HepG2 (cell line): ENCODE measurements at regions of chr6 and their contacts with region 1.

Region 1: GRCh38 chr6:30742316-30743098 is at the start of gene FLOT1:
- DNase-seq: peak; percentile 97
- ATAC-seq: peak; percentile 87
- H3K4me3 ChIP-seq: peak within 1 kb of the TSS; percentile 91 to 98 (median 98)
- H3K27ac ChIP-seq: peak within 1 kb of the TSS; percentile 81
- H3K4me1 ChIP-seq: peaks cover 78% of the 10 kb centered on the region
- H3K27me3 ChIP-seq: no peaks in the 10 kb centered on the region; a peak in 1 of 5 replicates
- CTCF ChIP-seq: peak; percentile 38
- EP300 ChIP-seq: peak; percentile 5 to 52; a peak in 2 of 4 replicates
- POLR2A ChIP-seq: no peak; a peak in 2 of 4 replicates
- RAD21 ChIP-seq: peak; percentile 64
- total RNA-seq, gene FLOT1: 77.8 and 82.3 TPM in 2 replicates

Region 2: DNA sequence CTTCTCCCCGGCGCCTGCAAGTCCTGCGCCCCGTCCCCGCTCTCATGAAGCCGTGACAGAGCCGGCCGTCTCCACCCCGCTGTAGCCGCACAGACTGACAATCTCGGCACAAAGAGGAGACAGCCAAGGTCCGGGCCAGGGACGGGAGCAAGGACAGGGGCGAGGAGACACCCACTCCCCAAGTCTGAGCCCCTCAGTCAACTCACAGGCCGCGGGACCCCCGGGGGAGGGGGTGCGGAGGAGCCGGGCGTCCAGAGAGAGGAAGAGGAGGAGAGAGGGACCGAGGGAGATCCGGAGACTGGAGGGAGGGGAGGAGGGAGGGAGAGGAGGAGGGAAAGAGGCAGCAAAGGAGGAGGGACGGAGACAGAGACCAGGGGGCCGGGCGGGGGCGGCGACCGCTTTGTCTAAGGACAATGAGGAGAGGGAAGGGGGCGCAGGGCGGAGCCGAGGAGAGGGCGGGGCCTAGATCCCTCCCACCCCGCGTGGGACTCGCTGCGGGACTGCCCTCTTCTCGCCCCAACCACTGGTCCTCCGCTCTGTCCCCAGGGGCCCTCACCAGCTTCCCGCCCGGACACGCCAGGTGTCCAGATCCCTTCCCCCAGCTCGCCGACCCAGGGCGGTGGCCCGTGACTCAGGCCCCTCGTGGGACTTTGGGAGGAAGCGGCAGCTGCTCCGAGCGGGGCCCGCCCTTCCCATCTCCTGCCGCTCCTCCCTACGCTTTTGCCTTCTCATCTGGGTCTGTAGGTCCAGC is 55.4 kb before region 1 on chr6:
- CTCF ChIA-PET with region 1: no interaction called
- POLR2A ChIA-PET with region 1: interaction called, 14 read pairs
- in situ Hi-C with region 1: no loop called
- intact Hi-C with region 1: no loop called
- DNase-seq: peak; percentile 49
- ATAC-seq: peak; percentile 50
- H3K4me3 ChIP-seq: peak overlapping the region; percentile 77 to 84 (median 81)
- H3K27ac ChIP-seq: peak overlapping the region; percentile 43
- H3K4me1 ChIP-seq: peaks cover 79% of the 10 kb centered on the region
- H3K27me3 ChIP-seq: no peaks in the 10 kb centered on the region
- CTCF ChIP-seq: peak; percentile 6; the same call in 1 of the 2 replicates
- EP300 ChIP-seq: peak in 1 of 2 experiments; percentile 55; a peak in 1 of 4 replicates
- POLR2A ChIP-seq: peak in 1 of 2 experiments; percentile 67; a peak in 3 of 4 replicates
- RAD21 ChIP-seq: no peak

Region 3: DNA sequence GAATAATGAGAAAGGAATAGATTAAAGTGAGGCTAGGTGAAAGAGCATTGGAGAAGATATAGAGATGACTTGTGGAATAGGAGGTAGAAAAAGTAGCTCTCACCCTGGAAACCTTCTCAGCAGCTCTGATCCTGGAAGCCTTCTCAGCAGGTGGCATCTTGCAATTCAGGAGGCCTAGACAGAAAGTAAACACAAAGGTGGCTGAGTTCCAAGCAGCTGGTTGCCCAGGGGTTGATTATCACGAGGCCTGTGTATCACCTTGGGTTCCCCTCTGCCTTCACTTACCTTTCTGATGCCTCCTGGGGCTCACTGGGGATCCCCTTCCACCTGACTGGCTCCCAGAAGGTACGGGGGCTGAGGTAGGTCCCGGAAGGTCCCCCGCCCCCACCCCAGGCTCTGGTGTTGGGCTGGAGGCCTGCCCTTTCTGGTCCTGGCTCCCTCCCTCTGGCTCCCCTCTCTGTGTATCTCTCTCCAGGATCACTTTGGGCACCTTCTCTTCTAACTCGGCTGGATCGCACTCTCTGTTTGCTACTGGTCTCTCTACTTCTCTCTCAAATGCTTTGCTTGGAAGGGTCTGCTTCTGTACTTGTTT is 35.1 kb before region 1 on chr6:
- CTCF ChIA-PET with region 1: no interaction called
- POLR2A ChIA-PET with region 1: no interaction called
- in situ Hi-C with region 1: no loop called
- intact Hi-C with region 1: no loop called
- DNase-seq: no peak
- ATAC-seq: no peak
- H3K4me3 ChIP-seq: no peak overlapping the region
- H3K27ac ChIP-seq: no peak overlapping the region
- H3K4me1 ChIP-seq: peaks cover 7% of the 10 kb centered on the region; the same call in 1 of the 2 replicates
- H3K27me3 ChIP-seq: no peaks in the 10 kb centered on the region
- CTCF ChIP-seq: no peak
- EP300 ChIP-seq: no peak
- POLR2A ChIP-seq: no peak
- RAD21 ChIP-seq: no peak

Region 4: GRCh38 chr6:30759575-30760239 is 17.2 kb after region 1 on chr6:
- CTCF ChIA-PET with region 1: no interaction called
- POLR2A ChIA-PET with region 1: interaction called, 414 read pairs
- in situ Hi-C with region 1: no loop called
- intact Hi-C with region 1: loop called (anchors 1 kb)
- DNase-seq: peak; percentile 97
- ATAC-seq: peak; percentile 66
- H3K4me3 ChIP-seq: peak overlapping the region in 1 of 3 experiments; percentile 13; a peak in 1 of 6 replicates
- H3K27ac ChIP-seq: peak overlapping the region; percentile 80
- H3K4me1 ChIP-seq: peaks cover 81% of the 10 kb centered on the region
- H3K27me3 ChIP-seq: no peaks in the 10 kb centered on the region
- CTCF ChIP-seq: no peak
- EP300 ChIP-seq: peak; percentile 64 to 65; a peak in 3 of 4 replicates
- POLR2A ChIP-seq: no peak
- RAD21 ChIP-seq: no peak

Region 5: GRCh38 chr6:30781743-30782424 is 39.4 kb after region 1 on chr6:
- CTCF ChIA-PET with region 1: interaction called, 3 read pairs
- POLR2A ChIA-PET with region 1: interaction called, 68 read pairs
- in situ Hi-C with region 1: no loop called
- intact Hi-C with region 1: loop called (anchors 1 kb)
- DNase-seq: peak; percentile 96
- ATAC-seq: peak; percentile 87
- H3K4me3 ChIP-seq: peak overlapping the region; percentile 39 to 49 (median 43); a peak in 5 of 6 replicates
- H3K27ac ChIP-seq: peak overlapping the region; percentile 83
- H3K4me1 ChIP-seq: peaks cover 86% of the 10 kb centered on the region
- H3K27me3 ChIP-seq: no peaks in the 10 kb centered on the region
- CTCF ChIP-seq: 0 out of 2 replicates have a peak, but pooled peaks have one; percentile 12
- EP300 ChIP-seq: peak; percentile 90 to 93
- POLR2A ChIP-seq: peak; percentile 20 to 34; a peak in 2 of 4 replicates
- RAD21 ChIP-seq: peak; percentile 20; the same call in 1 of the 2 replicates

Region 6: GRCh38 chr6:30821862-30822782 is 79.6 kb after region 1 on chr6:
- CTCF ChIA-PET with region 1: interaction called, 3 read pairs
- POLR2A ChIA-PET with region 1: interaction called, 71 read pairs
- in situ Hi-C with region 1: loop called (anchors 5 kb)
- intact Hi-C with region 1: loop called (anchors 1 kb)
- DNase-seq: peak; percentile 70
- ATAC-seq: peak; percentile 49
- H3K4me3 ChIP-seq: peak overlapping the region in 2 of 3 experiments; percentile 20 to 35; a peak in 3 of 6 replicates
- H3K27ac ChIP-seq: peak overlapping the region; percentile 79
- H3K4me1 ChIP-seq: peaks cover 71% of the 10 kb centered on the region
- H3K27me3 ChIP-seq: no peaks in the 10 kb centered on the region
- CTCF ChIP-seq: peak; percentile 55
- EP300 ChIP-seq: no peak
- POLR2A ChIP-seq: no peak
- RAD21 ChIP-seq: peak; percentile 30; the same call in 1 of the 2 replicates

Region 7: DNA sequence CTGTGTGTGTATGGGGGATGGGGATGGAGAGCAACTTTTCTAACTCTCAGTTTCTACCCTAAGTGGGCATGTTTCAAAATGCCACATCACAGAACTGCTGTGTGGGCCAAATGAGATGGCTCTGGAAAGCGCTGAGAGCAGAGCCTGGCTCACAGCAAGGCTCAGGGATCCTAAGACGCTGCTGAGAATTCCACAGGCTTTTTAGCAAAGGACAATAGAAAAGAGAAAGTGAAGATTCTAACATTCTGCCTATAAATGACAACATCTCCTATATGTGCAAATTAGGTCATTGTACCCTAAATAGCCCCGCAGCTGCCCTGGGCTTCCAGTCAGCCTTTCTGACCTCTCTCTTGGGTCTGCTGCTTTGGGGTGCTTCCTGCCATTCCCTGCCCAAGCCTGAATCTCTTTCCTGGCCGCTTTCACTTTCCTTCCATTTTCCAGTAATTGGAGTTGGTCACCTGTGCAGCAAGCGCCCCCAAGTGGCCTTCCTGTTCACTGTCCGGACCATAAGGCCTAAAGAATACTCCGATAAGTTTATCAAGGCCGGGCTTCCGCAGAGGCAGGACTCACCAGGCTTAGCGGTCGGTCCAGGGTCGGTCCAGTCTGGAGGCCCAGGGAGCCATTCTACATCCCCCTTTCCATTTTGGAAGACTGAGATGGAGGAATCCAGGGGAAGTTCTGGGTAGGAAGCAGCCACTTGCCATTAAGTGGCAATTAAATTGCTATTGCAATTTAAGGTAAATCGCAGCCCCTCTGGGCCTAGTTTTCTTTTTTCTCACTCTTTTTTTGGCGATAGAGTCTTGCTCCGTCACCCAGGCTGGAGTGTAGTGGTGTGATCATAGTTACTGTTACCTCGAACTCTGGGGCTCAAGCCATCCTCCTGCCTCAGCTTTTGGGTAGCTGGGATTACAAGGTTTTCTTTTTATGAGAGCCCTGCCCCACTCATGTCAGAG is 135.2 kb after region 1 on chr6:
- CTCF ChIA-PET with region 1: no interaction called
- POLR2A ChIA-PET with region 1: interaction called, 7 read pairs
- in situ Hi-C with region 1: loop called (anchors 5 kb)
- intact Hi-C with region 1: loop called (anchors 1 kb)
- DNase-seq: peak; percentile 91
- ATAC-seq: peak; percentile 84
- H3K4me3 ChIP-seq: peak overlapping the region; percentile 48 to 69 (median 49)
- H3K27ac ChIP-seq: no peak overlapping the region
- H3K4me1 ChIP-seq: peaks cover 48% of the 10 kb centered on the region
- H3K27me3 ChIP-seq: peaks cover 6 to 34% of the 10 kb centered on the region in 2 experiments
- CTCF ChIP-seq: peak; percentile 99
- EP300 ChIP-seq: peak in 1 of 2 experiments; percentile 28; a peak in 1 of 4 replicates
- POLR2A ChIP-seq: no peak
- RAD21 ChIP-seq: peak; percentile 97

Region 8: GRCh38 chr6:30926644-30927043 is 184.1 kb after region 1 on chr6:
- CTCF ChIA-PET with region 1: no interaction called
- POLR2A ChIA-PET with region 1: no interaction called
- in situ Hi-C with region 1: no loop called
- intact Hi-C with region 1: no loop called
- DNase-seq: no peak
- ATAC-seq: no peak
- H3K4me3 ChIP-seq: no peak overlapping the region
- H3K27ac ChIP-seq: no peak overlapping the region
- H3K4me1 ChIP-seq: no peaks in the 10 kb centered on the region
- H3K27me3 ChIP-seq: peaks cover 0 to 7% of the 10 kb centered on the region in 2 experiments; a peak in 1 of 5 replicates
- CTCF ChIP-seq: no peak
- EP300 ChIP-seq: no peak
- POLR2A ChIP-seq: no peak
- RAD21 ChIP-seq: no peak

Region 9: GRCh38 chr6:30963641-30964040 is 221.1 kb after region 1 on chr6:
- CTCF ChIA-PET with region 1: no interaction called
- POLR2A ChIA-PET with region 1: no interaction called
- in situ Hi-C with region 1: no loop called
- intact Hi-C with region 1: no loop called
- DNase-seq: no peak
- ATAC-seq: no peak; the same call in 2 of the 3 replicates
- H3K4me3 ChIP-seq: no peak overlapping the region
- H3K27ac ChIP-seq: no peak overlapping the region
- H3K4me1 ChIP-seq: peaks cover 14% of the 10 kb centered on the region
- H3K27me3 ChIP-seq: no peaks in the 10 kb centered on the region
- CTCF ChIP-seq: no peak
- EP300 ChIP-seq: no peak
- POLR2A ChIP-seq: no peak
- RAD21 ChIP-seq: no peak

Region 10: GRCh38 chr6:30981942-30982772 is 239.7 kb after region 1 on chr6:
- CTCF ChIA-PET with region 1: no interaction called
- POLR2A ChIA-PET with region 1: no interaction called
- in situ Hi-C with region 1: no loop called
- intact Hi-C with region 1: no loop called
- DNase-seq: peak; percentile 37
- ATAC-seq: peak; percentile 98
- H3K4me3 ChIP-seq: no peak overlapping the region
- H3K27ac ChIP-seq: no peak overlapping the region
- H3K4me1 ChIP-seq: peaks cover 7% of the 10 kb centered on the region; the same call in 1 of the 2 replicates
- H3K27me3 ChIP-seq: 0 out of 5 replicates have a peak, but pooled peaks cover 0 to 9% of the 10 kb centered on the region in 2 experiments
- CTCF ChIP-seq: peak; percentile 24; the same call in 1 of the 2 replicates
- EP300 ChIP-seq: no peak
- POLR2A ChIP-seq: no peak
- RAD21 ChIP-seq: no peak